ENCODE measurements at regions of chr16 and their contacts with region 1.

Region 1: DNA sequence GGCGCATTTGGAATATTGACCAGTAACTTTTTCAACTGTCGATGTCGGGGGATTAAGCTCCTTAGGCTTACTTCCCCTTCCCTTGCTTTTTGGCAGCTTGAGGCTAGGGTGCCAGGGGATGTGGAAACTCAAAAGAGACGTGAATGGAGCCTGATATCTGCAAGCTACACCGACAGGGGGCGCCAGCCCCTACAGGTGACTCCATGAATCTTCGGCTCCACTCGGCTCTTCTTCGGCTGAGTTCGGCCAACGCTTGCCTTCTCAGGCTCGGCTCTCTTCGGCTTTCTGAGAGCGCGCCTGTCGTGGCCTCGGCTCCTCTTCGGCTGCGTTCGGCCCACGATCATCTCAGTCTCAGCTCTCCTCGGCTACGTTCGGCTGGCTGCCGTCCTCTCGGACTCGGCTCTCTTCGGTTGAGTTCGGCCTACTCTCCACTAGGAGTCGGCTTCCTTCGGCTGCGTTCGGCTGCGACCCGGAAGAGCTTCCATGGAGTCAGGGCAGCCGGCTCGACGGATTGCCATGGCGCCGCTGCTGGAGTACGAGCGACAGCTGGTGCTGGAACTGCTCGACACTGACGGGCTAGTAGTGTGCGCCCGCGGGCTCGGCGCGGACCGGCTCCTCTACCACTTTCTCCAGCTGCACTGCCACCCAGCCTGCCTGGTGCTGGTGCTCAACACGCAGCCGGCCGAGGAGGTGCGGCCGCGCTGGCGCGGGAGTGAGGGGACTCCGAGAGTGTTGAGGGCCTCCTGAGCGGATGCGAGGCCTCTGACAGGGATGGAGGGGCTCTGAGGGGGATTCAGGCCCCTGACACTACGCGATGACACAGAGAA is at the start of gene ERCC4:
- DNase-seq: peak; percentile 99
- H3K4me3 ChIP-seq: peak within 1 kb of the TSS; percentile 98
- H3K27ac ChIP-seq: peak within 1 kb of the TSS; percentile 66
- H3K27me3 ChIP-seq: no peaks in the 10 kb centered on the region
- CTCF ChIP-seq: peak; percentile 94
- polyA plus RNA-seq, gene ERCC4: 9.8 and 11.4 TPM in 2 replicates

Region 2: DNA sequence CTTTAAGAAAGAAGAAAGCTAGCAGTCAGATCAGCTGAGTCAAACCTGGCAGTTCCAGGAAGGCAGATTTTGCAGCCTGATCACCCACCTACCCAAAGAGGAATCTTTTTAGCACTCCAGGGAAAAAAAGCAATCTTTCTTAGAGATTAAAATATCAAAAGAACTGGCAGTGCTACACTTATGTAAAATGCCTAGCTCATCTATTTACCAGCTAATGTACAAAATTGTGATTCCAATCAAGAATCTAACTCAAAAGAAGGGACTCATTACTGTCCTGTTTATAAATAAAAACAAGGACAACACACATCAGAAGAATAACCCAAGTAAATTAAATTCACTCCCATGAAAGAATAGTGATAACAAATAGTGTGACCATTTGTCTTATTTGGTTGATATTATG is 222.3 kb before region 1 on chr16:
- CTCF ChIA-PET with region 1: no interaction called
- POLR2A ChIA-PET with region 1: no interaction called
- DNase-seq: no peak
- H3K4me3 ChIP-seq: no peak overlapping the region
- H3K27ac ChIP-seq: no peak overlapping the region
- H3K27me3 ChIP-seq: no peaks in the 10 kb centered on the region
- CTCF ChIP-seq: no peak

Region 3: GRCh38 chr16:13808102-13808501 is 111.8 kb before region 1 on chr16:
- CTCF ChIA-PET with region 1: no interaction called
- POLR2A ChIA-PET with region 1: no interaction called
- DNase-seq: no peak
- H3K4me3 ChIP-seq: no peak overlapping the region
- H3K27ac ChIP-seq: no peak overlapping the region
- H3K27me3 ChIP-seq: no peaks in the 10 kb centered on the region
- CTCF ChIP-seq: no peak

Region 4: DNA sequence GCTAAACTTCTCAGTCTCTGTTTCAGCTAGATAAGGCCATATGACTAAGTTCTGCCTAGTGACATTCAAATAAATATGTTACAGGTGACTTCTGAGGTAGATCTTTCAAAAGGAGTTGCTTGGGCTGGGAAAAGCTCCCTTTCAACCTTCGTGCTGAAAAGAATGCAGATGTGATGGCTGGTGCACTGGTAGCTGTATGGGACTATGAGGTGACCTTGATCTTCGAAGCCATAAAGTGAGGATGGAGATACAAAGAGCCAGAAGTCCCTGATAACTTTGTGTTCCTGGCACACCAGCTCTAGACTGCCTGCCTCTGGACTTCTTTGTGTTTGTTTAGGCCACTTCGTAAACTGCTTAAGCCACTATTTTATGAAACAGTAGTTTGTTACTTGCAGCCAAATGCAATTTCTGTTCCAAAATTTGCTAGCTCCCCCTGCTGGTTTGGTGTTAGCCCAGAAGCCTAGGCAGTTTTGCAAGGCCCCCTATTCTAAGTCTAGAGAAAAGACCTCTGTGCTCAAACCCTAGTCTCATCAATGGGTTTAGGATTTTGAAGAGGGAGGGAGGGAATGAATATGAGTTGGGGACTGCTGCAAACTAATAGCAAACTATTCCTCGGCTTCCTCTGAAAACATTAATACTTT is 23.2 kb before region 1 on chr16:
- CTCF ChIA-PET with region 1: interaction called, 19 read pairs
- POLR2A ChIA-PET with region 1: no interaction called
- DNase-seq: no peak
- H3K4me3 ChIP-seq: no peak overlapping the region
- H3K27ac ChIP-seq: no peak overlapping the region
- H3K27me3 ChIP-seq: no peaks in the 10 kb centered on the region
- CTCF ChIP-seq: peak; percentile 28; the same call in 1 of the 2 replicates

Region 5: GRCh38 chr16:13935408-13935807 is 15.5 kb after region 1 on chr16:
- CTCF ChIA-PET with region 1: interaction called, 27 read pairs
- POLR2A ChIA-PET with region 1: no interaction called
- DNase-seq: no peak
- H3K4me3 ChIP-seq: no peak overlapping the region
- H3K27ac ChIP-seq: no peak overlapping the region
- H3K27me3 ChIP-seq: no peaks in the 10 kb centered on the region
- CTCF ChIP-seq: peak; percentile 49

Region 6: GRCh38 chr16:14015948-14016347 is 96.1 kb after region 1 on chr16:
- CTCF ChIA-PET with region 1: interaction called, 12 read pairs
- POLR2A ChIA-PET with region 1: no interaction called
- DNase-seq: peak; percentile 80
- H3K4me3 ChIP-seq: no peak overlapping the region
- H3K27ac ChIP-seq: peak overlapping the region; percentile 47
- H3K27me3 ChIP-seq: no peaks in the 10 kb centered on the region
- CTCF ChIP-seq: no peak

Region 7: GRCh38 chr16:14219983-14220382 is 300.1 kb after region 1 on chr16:
- CTCF ChIA-PET with region 1: interaction called, 10 read pairs
- POLR2A ChIA-PET with region 1: no interaction called
- DNase-seq: no peak
- H3K4me3 ChIP-seq: no peak overlapping the region
- H3K27ac ChIP-seq: no peak overlapping the region
- H3K27me3 ChIP-seq: no peaks in the 10 kb centered on the region
- CTCF ChIP-seq: no peak

Region 8: DNA sequence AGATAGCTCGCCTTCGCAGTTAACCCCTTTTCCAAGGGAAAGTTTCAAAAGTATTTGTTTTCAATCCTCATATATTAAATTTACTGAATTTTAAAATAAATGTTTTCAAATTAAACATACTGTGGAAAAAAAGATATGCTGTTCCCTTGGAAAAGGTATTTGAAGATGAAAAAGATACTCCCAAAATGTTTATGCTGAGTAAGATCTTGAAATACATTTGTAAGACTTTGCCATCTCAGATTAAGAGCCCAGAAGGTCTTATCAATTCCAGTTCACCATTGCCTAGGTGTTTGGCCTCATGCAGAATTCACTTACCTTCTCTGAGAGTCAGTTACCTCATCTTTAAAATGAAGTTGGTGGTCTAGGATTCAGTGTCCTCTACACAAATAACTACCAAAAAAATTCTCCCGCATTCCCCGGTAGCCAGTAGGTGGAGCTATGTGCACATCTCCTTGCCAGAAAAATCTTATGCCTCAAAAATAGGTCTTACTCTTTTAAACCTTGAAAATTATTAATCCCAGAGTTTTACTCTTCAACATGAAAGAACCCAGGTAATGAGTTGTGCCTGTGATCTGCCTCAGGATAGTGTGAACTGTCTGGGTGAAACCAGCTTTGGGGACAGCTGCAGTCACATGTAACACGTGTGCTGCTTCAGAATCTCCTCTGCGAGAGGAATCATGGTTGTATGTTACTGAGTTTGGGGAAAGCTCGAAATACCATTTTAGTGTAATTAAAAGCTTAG is 329.6 kb after region 1 on chr16:
- CTCF ChIA-PET with region 1: interaction called, 61 read pairs
- POLR2A ChIA-PET with region 1: no interaction called
- DNase-seq: no peak
- H3K4me3 ChIP-seq: no peak overlapping the region
- H3K27ac ChIP-seq: no peak overlapping the region
- H3K27me3 ChIP-seq: no peaks in the 10 kb centered on the region
- CTCF ChIP-seq: peak; percentile 96

Measured in AG04450 (cell line).